Mammary epithelial cell (primary cell): ENCODE measurements at regions of chr3 and their contacts with region 1.

Region 1: DNA sequence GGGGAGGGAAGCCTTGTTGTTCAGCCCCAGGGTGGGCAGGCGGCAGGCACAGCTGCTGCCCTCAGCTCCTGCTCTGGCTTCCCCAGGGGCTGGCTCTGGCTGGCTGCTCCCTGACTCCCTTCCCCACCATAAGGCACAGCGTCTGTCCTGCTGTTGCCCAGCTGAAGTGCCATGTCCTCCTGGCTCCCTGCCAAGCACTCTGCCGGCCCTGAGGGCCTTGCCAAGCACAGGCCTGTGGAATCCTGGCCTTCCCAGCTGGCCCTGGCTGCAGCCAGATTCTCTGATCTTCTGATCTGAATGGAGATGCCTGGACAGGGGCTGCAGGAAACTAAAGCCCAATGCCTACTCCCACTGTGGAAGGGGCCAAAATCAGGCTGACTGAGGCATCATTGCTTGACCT is 1.1 kb downstream of the IQCF6 start:
- DNase-seq: no peak
- H3K4me3 ChIP-seq: no peak overlapping the region
- H3K27ac ChIP-seq: no peak overlapping the region
- H3K4me1 ChIP-seq: no peaks in the 10 kb centered on the region
- H3K27me3 ChIP-seq: no peaks in the 10 kb centered on the region
- CTCF ChIP-seq: no peak

Region 2: GRCh38 chr3:50815867-50816266 is 962.1 kb before region 1 on chr3:
- CTCF ChIA-PET with region 1: no interaction called
- dilution Hi-C with region 1: no loop called
- in situ Hi-C with region 1: no loop called
- intact Hi-C with region 1: no loop called
- DNase-seq: peak; percentile 67
- H3K4me3 ChIP-seq: no peak overlapping the region
- H3K27ac ChIP-seq: no peak overlapping the region
- H3K4me1 ChIP-seq: no peaks in the 10 kb centered on the region
- H3K27me3 ChIP-seq: peaks cover 1% of the 10 kb centered on the region
- CTCF ChIP-seq: no peak

Region 3: DNA sequence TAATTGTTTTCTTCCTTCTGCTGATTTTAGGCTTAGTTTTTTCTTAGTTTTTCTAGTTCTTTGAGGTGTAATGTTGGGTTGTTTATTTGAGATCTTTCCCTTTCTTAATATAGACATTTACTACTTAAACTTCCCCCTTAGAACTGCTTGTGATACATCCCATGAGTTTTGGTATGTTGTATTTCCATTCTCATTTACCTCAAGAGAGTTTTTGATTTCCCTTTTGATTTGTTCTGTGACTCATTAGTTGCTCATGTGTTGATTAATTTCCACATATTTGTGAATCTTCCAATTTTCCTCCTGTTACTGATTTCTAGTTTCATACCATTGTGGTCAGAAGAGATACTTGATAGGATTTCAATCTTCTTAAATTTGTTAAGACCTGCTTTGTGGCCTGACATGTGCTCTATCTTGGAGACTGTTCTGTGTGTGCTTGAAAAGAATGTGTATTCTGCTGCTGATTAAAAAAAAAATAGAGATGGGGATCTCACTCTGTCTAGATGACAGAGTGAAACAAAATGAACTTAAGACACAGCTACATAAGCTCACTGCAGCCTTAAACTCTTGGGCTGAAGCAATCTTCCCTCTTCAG is 48.8 kb before region 1 on chr3:
- CTCF ChIA-PET with region 1: interaction called, 3 read pairs
- dilution Hi-C with region 1: loop called (anchors 5 kb)
- in situ Hi-C with region 1: loop called in 1 of 2 experiments (anchors 10 kb)
- intact Hi-C with region 1: no loop called
- DNase-seq: peak; percentile 54
- H3K4me3 ChIP-seq: no peak overlapping the region
- H3K27ac ChIP-seq: no peak overlapping the region
- H3K4me1 ChIP-seq: peaks cover 6% of the 10 kb centered on the region
- H3K27me3 ChIP-seq: no peaks in the 10 kb centered on the region
- CTCF ChIP-seq: no peak

Region 4: DNA sequence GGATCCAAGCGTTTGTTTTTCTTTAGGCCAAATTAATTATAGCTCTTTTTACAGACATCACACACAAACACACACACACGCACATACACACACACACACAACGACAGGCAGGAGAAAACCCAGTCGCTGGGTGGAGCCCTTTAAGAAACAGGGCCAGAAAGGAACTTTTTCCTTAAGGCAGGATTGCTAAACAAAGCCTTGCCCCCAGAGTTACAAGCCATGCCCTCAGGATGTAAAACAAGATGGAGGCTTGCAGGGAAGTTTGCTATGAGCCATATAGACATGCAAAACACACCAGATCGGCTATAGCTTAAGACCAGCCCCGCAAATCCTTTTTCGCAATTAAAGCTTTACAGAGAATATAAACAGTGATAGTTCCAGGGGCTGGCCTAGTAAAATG is 67.1 kb after region 1 on chr3:
- CTCF ChIA-PET with region 1: no interaction called
- dilution Hi-C with region 1: loop called (anchors 5 kb)
- in situ Hi-C with region 1: no loop called
- intact Hi-C with region 1: no loop called
- DNase-seq: no peak
- H3K4me3 ChIP-seq: no peak overlapping the region
- H3K27ac ChIP-seq: no peak overlapping the region
- H3K4me1 ChIP-seq: no peaks in the 10 kb centered on the region
- H3K27me3 ChIP-seq: no peaks in the 10 kb centered on the region
- CTCF ChIP-seq: no peak

Region 5: GRCh38 chr3:52001443-52001974 is 223.5 kb after region 1 on chr3:
- CTCF ChIA-PET with region 1: no interaction called
- dilution Hi-C with region 1: no loop called
- in situ Hi-C with region 1: no loop called
- intact Hi-C with region 1: no loop called
- DNase-seq: peak; percentile 49
- H3K4me3 ChIP-seq: no peak overlapping the region
- H3K27ac ChIP-seq: no peak overlapping the region
- H3K4me1 ChIP-seq: peaks cover 35% of the 10 kb centered on the region
- H3K27me3 ChIP-seq: no peaks in the 10 kb centered on the region
- CTCF ChIP-seq: peak; percentile 75 to 90